Activated CD8-positive, alpha-beta T cell treated with anti-CD3 and anti-CD28 coated beads, Interleukin-2, amount 10 ng/mL, durations not matched to agents 7 days and 5 days (primary cell): ENCODE measurements at regions of chr5 and their contacts with region 1.

Region 1: GRCh38 chr5:55982957-55983381 is 11.8 kb downstream of the IL6ST start:
- DNase-seq: no peak
- ATAC-seq: peak; percentile 23
- H3K4me3 Mint-ChIP-seq: no peak overlapping the region
- H3K27ac Mint-ChIP-seq: peak overlapping the region; percentile 43
- H3K4me1 Mint-ChIP-seq: peaks cover 39% of the 10 kb centered on the region
- H3K27me3 Mint-ChIP-seq: no peaks in the 10 kb centered on the region

Region 2: DNA sequence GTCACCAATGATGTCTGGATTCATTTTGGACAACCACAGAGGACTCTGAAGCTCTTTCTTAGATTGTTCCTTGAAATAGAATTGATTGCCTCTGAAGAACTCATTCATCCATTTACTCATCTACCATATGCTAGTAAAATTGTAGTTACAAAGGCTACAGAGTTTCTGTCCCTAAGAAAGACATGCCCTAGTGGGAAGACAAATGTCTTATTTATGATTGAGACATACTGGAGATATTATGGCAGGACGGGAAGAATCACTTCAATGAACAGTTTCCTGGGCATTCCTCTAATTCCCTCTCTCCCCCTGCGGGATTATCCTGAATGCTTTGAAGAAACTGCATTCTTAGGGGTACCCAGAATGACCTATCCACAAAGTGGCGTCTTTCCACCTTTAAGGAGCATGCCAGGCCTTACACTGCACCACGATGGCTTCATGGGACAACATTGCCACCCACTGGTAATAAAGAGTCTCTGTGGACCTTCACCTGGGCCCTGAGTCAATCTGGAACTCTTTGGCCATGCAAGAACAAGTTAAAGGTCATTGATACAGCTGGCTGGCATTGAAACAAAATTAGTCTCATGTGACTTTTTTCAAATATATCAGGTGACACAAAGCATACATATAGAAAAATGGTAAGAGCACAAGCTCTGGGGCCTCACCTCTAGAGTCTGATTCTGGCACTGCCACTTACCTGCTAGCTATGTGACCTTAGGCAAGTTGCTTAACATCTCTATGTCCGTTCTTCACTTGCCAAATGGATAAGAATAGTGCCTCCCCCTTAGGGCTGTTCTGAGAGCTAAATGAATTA is 218.1 kb after region 1 on chr5:
- CTCF ChIA-PET with region 1: interaction called, 59 read pairs
- POLR2A ChIA-PET with region 1: no interaction called
- DNase-seq: peak; percentile 72
- ATAC-seq: peak; percentile 93
- H3K4me3 Mint-ChIP-seq: no peak overlapping the region
- H3K27ac Mint-ChIP-seq: no peak overlapping the region
- H3K4me1 Mint-ChIP-seq: peaks cover 1% of the 10 kb centered on the region
- H3K27me3 Mint-ChIP-seq: no peaks in the 10 kb centered on the region